ENCODE measurements at regions of chr2 and their contacts with region 1.

Region 1: GRCh38 chr2:199911052-199911876 is at the start of gene C2orf69:
- DNase-seq: peak; percentile 97
- total RNA-seq, gene C2orf69: 8.7 TPM

Region 2: GRCh38 chr2:199955339-199956261 is 44.3 kb after region 1 on chr2 and contains the starts of genes MAIP1 and TYW5:
- intact Hi-C with region 1: loop called (anchors 5 kb)
- DNase-seq: peak; percentile 93
- total RNA-seq, gene MAIP1: 20.6 TPM
- total RNA-seq, gene TYW5: 3.1 TPM

Measured in cardiac septum (tissue), 1 donor.